A673 (cell line): ENCODE measurements at regions of chr2 and their contacts with region 1.

Region 1: GRCh38 chr2:181077128-181077709 is 96.8 kb downstream of the UBE2E3 start:
- DNase-seq: peak; percentile 72
- H3K4me3 ChIP-seq: no peak overlapping the region
- H3K27ac ChIP-seq: no peak overlapping the region
- H3K4me1 ChIP-seq: no peaks in the 10 kb centered on the region
- H3K27me3 ChIP-seq: no peaks in the 10 kb centered on the region
- CTCF ChIP-seq: peak; percentile 82

Region 2: GRCh38 chr2:181165199-181165868 is 88.1 kb after region 1 on chr2:
- CTCF ChIA-PET with region 1: no interaction called
- POLR2A ChIA-PET with region 1: no interaction called
- intact Hi-C with region 1: no loop called
- DNase-seq: no peak
- H3K4me3 ChIP-seq: no peak overlapping the region
- H3K27ac ChIP-seq: no peak overlapping the region
- H3K4me1 ChIP-seq: no peaks in the 10 kb centered on the region
- H3K27me3 ChIP-seq: no peaks in the 10 kb centered on the region
- CTCF ChIP-seq: no peak

Region 3: GRCh38 chr2:181715033-181715630 is 637.9 kb after region 1 on chr2:
- CTCF ChIA-PET with region 1: no interaction called
- POLR2A ChIA-PET with region 1: no interaction called
- intact Hi-C with region 1: loop called (anchors 2 kb)
- DNase-seq: peak; percentile 85
- H3K4me3 ChIP-seq: no peak overlapping the region
- H3K27ac ChIP-seq: no peak overlapping the region
- H3K4me1 ChIP-seq: no peaks in the 10 kb centered on the region
- H3K27me3 ChIP-seq: no peaks in the 10 kb centered on the region
- CTCF ChIP-seq: peak; percentile 81

Region 4: DNA sequence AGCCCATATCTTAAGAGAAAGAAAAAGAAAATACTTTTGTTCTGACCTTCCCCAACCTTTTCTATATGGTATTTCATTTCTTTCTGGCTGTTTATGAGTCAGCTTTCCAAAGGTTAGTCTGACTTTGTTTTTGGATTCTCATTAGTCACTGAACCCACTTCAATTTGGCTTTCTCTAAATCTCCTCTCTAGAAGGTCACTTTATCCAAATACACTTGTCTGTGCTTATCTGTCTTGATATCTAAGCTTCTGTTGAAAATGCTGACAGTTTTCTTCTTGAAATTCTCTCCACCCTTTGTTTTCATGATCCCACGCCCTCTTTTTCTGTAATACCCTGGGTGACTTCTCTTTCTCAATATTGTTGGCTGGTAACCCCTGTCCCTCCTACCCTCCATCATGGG is 943.5 kb after region 1 on chr2:
- CTCF ChIA-PET with region 1: no interaction called
- POLR2A ChIA-PET with region 1: no interaction called
- intact Hi-C with region 1: no loop called
- DNase-seq: no peak
- H3K4me3 ChIP-seq: no peak overlapping the region
- H3K27ac ChIP-seq: no peak overlapping the region
- H3K4me1 ChIP-seq: no peaks in the 10 kb centered on the region
- H3K27me3 ChIP-seq: no peaks in the 10 kb centered on the region
- CTCF ChIP-seq: no peak

Region 5: DNA sequence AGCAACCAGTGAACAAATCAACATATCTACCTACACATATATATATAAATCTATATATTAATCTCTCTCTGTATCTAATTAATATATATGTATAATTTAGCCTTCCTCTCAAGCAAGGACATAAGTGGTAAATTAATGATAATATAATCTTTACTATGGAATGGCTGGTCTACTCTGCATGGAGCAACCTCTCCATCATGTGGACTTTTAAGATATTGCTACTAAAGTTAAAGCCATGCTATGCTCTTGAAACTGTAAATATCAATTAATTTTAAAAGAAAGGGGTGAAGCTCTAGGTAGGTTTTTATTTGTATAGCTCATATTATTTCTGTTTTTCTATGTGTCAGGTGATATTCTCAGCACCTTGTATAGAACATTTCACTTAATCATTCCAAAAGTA is 1055.4 kb after region 1 on chr2:
- CTCF ChIA-PET with region 1: no interaction called
- POLR2A ChIA-PET with region 1: no interaction called
- intact Hi-C with region 1: loop called (anchors 5 kb)
- DNase-seq: peak; percentile 18
- H3K4me3 ChIP-seq: no peak overlapping the region
- H3K27ac ChIP-seq: no peak overlapping the region
- H3K4me1 ChIP-seq: no peaks in the 10 kb centered on the region
- H3K27me3 ChIP-seq: no peaks in the 10 kb centered on the region
- CTCF ChIP-seq: peak; percentile 45; the same call in 1 of the 2 replicates